Activated T-helper 1 cell treated with anti-CD3 and anti-CD28 coated beads, Interleukin-12 subunit alpha, Interleukin-12 subunit beta, Interleukin-2, Interleukin-4 antibody, amounts not matched to agents 30 ng/mL and 10 ng/mL and 1 ng/mL, durations not matched to agents 14 hours and 24 hours and 36 hours (primary cell): ENCODE measurements at regions of chr20 and their contacts with region 1.

Region 1: GRCh38 chr20:48828022-48828743 is 384 bp upstream of the PREX1 start:
- DNase-seq: peak; percentile 84
- H3K4me3 Mint-ChIP-seq: peak overlapping the region; percentile 85
- H3K27ac Mint-ChIP-seq: peak overlapping the region; percentile 92
- H3K4me1 Mint-ChIP-seq: peaks cover 55% of the 10 kb centered on the region
- H3K27me3 Mint-ChIP-seq: peaks cover 7% of the 10 kb centered on the region

Region 2: DNA sequence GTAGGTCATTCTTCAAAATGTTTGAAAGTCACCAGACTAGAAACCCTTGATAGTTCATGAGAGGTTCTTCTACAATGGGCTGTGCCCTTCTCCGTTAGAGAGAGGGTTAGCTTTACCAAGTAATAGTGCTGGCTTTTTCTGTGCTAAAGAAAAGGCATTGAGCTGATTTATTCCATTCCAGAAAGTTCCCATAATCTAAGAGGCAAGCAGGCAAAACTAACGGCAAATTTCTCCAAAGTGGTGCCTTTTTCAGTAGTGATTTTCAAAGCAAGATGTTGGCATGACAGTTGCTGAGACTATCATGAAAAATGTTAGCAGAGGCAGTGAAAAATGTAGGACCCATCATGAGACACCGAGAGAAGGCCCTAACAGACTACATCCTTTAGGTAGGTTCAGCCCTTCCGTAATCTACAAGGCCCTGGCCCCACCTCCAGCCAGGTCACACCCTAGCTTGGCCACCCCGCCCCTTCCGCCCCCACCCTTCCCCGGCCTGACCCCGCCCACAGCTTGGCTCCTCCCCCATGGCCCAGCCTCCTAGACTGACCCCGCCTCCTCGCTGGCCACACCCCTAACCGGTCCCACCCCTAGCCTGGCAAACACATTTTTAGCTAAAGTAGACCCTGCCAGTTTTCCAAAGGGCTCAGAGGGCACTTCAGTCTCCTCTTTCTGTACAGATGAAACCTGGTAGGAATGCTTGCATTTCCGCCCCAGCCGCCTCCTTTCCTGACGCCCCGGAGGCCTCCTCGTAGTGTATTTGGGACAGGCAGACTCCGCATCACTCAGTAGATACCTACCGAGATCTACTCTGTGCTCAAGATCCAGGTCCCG is 444.1 kb before region 1 on chr20:
- intact Hi-C with region 1: no loop called
- DNase-seq: no peak
- H3K4me3 Mint-ChIP-seq: no peak overlapping the region
- H3K27ac Mint-ChIP-seq: no peak overlapping the region
- H3K4me1 Mint-ChIP-seq: no peaks in the 10 kb centered on the region
- H3K27me3 Mint-ChIP-seq: no peaks in the 10 kb centered on the region

Region 3: GRCh38 chr20:48718857-48719578 is 109.2 kb before region 1 on chr20:
- intact Hi-C with region 1: loop called (anchors 5 kb)
- DNase-seq: peak; percentile 44
- H3K4me3 Mint-ChIP-seq: peak overlapping the region; percentile 5
- H3K27ac Mint-ChIP-seq: peak overlapping the region; percentile 88
- H3K4me1 Mint-ChIP-seq: peaks cover 89% of the 10 kb centered on the region
- H3K27me3 Mint-ChIP-seq: no peaks in the 10 kb centered on the region

Region 4: GRCh38 chr20:48760403-48760983 is 67.7 kb before region 1 on chr20:
- intact Hi-C with region 1: loop called (anchors 2 kb)
- DNase-seq: peak; percentile 75
- H3K4me3 Mint-ChIP-seq: peak overlapping the region; percentile 78
- H3K27ac Mint-ChIP-seq: peak overlapping the region; percentile 96
- H3K4me1 Mint-ChIP-seq: peaks cover 86% of the 10 kb centered on the region
- H3K27me3 Mint-ChIP-seq: no peaks in the 10 kb centered on the region

Region 5: GRCh38 chr20:48787861-48788375 is 40.3 kb before region 1 on chr20:
- intact Hi-C with region 1: loop called (anchors 1 kb)
- DNase-seq: no peak
- H3K4me3 Mint-ChIP-seq: no peak overlapping the region
- H3K27ac Mint-ChIP-seq: peak overlapping the region; percentile 27
- H3K4me1 Mint-ChIP-seq: peaks cover 60% of the 10 kb centered on the region
- H3K27me3 Mint-ChIP-seq: no peaks in the 10 kb centered on the region

Region 6: GRCh38 chr20:48904365-48905296 is 76.4 kb after region 1 on chr20:
- intact Hi-C with region 1: loop called (anchors 1 kb)
- DNase-seq: peak; percentile 50
- H3K4me3 Mint-ChIP-seq: no peak overlapping the region
- H3K27ac Mint-ChIP-seq: no peak overlapping the region
- H3K4me1 Mint-ChIP-seq: peaks cover 16% of the 10 kb centered on the region
- H3K27me3 Mint-ChIP-seq: peaks cover 7% of the 10 kb centered on the region

Region 7: DNA sequence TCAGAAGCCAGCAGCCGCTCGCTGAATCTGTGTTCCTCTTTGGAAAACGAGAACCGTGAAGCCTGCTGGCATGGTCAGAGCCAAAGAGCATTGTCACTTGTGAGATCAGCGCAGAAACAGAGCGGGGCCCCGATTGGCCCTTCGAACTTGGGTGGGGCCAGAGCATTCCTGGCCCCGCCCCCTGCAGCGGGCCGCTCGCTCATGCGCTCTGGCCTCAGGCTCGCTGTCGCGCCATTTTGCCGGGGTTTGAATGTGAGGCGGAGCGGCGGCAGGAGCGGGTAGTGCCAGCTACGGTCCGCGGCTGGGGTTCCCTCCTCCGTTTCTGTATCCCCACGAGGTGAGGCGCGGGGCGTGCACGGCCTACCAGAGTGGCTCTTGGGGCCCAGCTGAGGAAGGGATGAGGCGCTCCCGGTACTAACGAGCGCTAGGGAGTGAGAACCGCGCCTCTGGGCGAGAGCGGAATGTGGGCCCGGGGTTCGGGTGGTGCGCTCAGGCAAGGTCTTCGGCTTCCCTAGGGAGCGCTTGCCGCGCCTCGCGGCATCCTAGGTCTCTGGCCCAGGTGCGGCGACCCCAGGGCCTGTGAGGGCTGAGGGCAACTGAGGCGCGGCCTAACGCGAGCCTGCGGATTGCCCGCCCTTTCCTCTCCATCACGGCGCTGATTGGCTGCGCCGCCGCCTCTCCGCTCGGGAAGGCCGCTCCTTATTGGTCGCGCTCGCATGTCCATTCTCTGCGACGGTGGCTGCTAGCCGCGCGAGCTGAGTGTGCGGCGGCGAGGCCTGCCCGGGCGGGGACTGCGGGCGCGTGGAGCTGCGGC is 218.1 kb after region 1 on chr20 and contains the start of gene CSE1L:
- intact Hi-C with region 1: loop called (anchors 5 kb)
- DNase-seq: peak; percentile 94
- H3K4me3 Mint-ChIP-seq: peak within 1 kb of the TSS; percentile 88
- H3K27ac Mint-ChIP-seq: peak within 1 kb of the TSS; percentile 99
- H3K4me1 Mint-ChIP-seq: peaks cover 27% of the 10 kb centered on the region
- H3K27me3 Mint-ChIP-seq: peaks cover 2% of the 10 kb centered on the region
- total RNA-seq, gene CSE1L: 112 and 119 TPM in 2 replicates

Region 8: GRCh38 chr20:49812463-49813304 is 984.5 kb after region 1 on chr20 and contains the start of gene SLC9A8:
- intact Hi-C with region 1: loop called (anchors 5 kb)
- DNase-seq: peak; percentile 83
- H3K4me3 Mint-ChIP-seq: peak within 1 kb of the TSS; percentile 91
- H3K27ac Mint-ChIP-seq: peak within 1 kb of the TSS; percentile 97
- H3K4me1 Mint-ChIP-seq: peaks cover 50% of the 10 kb centered on the region
- H3K27me3 Mint-ChIP-seq: no peaks in the 10 kb centered on the region
- total RNA-seq, gene SLC9A8: 16.2 and 20.8 TPM in 2 replicates